K562 (cell line): ENCODE measurements at regions of chrX and their contacts with region 1.

Region 1: DNA sequence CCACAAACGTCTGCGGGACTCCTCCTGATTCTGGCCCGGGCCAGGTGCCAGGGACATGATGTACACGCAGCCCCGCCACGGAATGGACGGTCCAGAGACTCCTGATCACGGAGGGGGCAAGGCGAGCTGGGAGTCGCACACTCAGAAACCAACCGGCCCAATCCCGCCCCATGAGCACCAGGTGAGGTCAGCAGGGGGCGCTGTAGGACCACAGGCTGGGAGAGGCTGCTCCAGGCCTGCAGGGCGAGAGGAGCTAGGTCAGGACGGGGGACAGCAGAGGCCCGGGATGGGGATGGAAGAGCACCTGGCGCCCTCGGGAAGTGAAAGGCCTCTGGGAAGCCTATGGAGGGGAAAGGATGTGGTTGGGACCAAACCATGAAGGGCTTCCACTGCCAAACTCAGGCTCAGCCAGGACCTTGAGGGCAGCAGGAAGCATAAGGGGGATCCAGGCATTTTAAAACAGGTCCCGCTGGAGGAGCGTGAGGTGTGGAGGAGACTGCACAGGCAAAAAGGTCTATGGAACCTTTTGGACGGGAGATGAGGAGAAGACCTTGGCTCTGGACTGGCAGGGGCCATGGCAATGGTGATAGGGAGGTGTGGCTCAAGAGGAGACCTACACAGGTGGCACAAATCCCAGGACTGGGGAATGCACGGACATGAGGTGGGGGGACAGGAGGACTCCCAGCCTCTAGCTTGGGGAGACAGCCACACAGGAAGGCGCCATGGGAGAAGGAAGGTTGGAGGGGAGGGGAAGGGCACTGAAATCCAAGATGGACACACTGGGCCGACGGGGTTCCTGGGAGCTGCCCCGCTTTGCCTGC is 79.2 kb downstream of the MTMR1 start:
- DNase-seq: peak; percentile 81 to 82 (median 82)
- ATAC-seq: peak; percentile 97
- H3K4me3 ChIP-seq: no peak overlapping the region
- H3K27ac ChIP-seq: no peak overlapping the region
- H3K4me1 ChIP-seq: peaks cover 6 to 15% of the 10 kb centered on the region in 2 experiments; a peak in 4 of 5 replicates
- H3K27me3 ChIP-seq: no peaks in the 10 kb centered on the region
- CTCF ChIP-seq: peak; percentile 82 to 93 (median 91)
- EP300 ChIP-seq: no peak
- POLR2A ChIP-seq: no peak
- RAD21 ChIP-seq: peak; percentile 90 to 95

Region 2: DNA sequence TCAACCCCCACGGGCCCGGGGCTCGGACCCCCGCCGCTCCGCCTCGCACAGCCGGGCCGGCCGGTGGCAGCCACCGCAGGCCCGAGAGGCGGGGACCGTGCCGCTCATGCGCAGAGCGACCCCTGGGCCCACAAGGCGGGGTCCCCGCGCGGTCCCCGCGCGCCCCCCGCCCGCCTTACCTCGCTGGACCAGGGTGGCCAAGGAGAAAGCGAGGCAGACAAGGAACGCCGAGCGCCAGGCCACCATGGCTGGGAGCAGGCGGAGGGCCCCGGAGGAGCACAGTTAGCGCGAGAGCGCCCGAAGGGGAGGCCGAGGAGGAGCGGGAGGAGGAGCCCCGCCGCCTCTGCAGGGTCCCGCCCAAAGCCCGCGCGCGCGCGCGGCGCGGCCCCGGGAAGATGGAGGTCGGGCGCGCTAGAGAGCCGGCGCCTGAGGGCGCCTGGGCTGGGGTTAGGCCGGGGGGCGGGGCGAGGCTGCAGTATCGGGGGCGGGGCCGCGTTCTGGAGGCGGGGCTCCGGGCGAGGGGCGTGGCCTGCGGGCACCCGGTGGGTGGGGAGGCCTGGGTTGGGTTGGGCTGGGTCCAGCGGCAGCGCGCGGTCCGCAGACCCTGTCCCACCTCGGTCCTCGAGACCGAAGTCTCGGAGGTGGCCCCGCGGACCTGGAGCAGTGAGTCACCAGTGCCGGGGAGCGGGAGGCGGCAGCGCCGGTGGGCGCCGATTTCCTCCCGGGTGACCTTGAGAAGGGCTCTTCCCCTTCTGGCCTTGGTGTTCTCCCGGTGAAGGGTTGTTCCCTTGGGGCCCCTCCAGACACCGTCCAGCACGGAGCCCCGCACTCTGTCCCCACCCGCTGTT is 126.2 kb after region 1 on chrX and contains the start of gene CD99L2:
- CTCF ChIA-PET with region 1: no interaction called
- POLR2A ChIA-PET with region 1: no interaction called
- in situ Hi-C with region 1: no loop called
- intact Hi-C with region 1: loop called (anchors 2 kb)
- DNase-seq: peak; percentile 92 to 94 (median 94)
- ATAC-seq: peak; percentile 97
- H3K4me3 ChIP-seq: peak within 1 kb of the TSS; percentile 78
- H3K27ac ChIP-seq: peak within 1 kb of the TSS; percentile 85
- H3K4me1 ChIP-seq: peaks cover 14 to 25% of the 10 kb centered on the region in 2 experiments
- H3K27me3 ChIP-seq: no peaks in the 10 kb centered on the region
- CTCF ChIP-seq: no peak
- EP300 ChIP-seq: no peak
- POLR2A ChIP-seq: peak; percentile 78
- RAD21 ChIP-seq: no peak
- polyA plus RNA-seq, gene CD99L2: 0.76 to 2.8 TPM

Region 3: DNA sequence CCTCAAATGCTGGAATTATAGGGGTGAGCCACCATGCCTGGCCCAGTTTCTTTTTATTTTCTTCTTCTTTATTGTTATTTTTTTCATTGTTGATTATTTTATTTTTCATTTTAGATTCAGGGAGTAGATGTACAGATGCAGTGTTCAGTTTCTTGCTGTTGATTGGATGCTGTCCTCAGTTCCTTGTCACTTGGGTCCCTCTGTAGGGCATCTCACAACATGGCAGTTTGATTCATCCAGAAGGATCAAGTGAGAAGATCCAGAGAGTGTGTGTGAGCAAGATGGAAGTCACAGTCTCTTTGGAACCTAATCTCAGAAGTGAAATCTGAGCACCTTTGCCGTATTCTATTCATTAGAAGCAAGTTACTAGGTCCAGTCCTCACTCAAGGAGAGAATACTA is 231.7 kb after region 1 on chrX:
- CTCF ChIA-PET with region 1: no interaction called
- POLR2A ChIA-PET with region 1: interaction called, 6 read pairs
- in situ Hi-C with region 1: loop called (anchors 5 kb)
- intact Hi-C with region 1: loop called (anchors 1 kb)
- DNase-seq: no peak
- ATAC-seq: peak; percentile 61; the same call in 2 of the 3 replicates
- H3K4me3 ChIP-seq: no peak overlapping the region
- H3K27ac ChIP-seq: no peak overlapping the region
- H3K4me1 ChIP-seq: no peaks in the 10 kb centered on the region
- H3K27me3 ChIP-seq: no peaks in the 10 kb centered on the region; a peak in 1 of 5 replicates
- CTCF ChIP-seq: peak; percentile 24 to 51 (median 39); a peak in 3 of 6 replicates
- EP300 ChIP-seq: no peak
- POLR2A ChIP-seq: no peak
- RAD21 ChIP-seq: peak in 1 of 2 experiments; percentile 45; a peak in 2 of 4 replicates

Region 4: GRCh38 chrX:151082076-151082948 is 310.0 kb after region 1 on chrX:
- CTCF ChIA-PET with region 1: interaction called, 17 read pairs
- POLR2A ChIA-PET with region 1: interaction called, 5 read pairs
- in situ Hi-C with region 1: loop called (anchors 10 kb)
- intact Hi-C with region 1: loop called (anchors 1 kb)
- DNase-seq: peak; percentile 70 to 73 (median 71)
- ATAC-seq: peak; percentile 98
- H3K4me3 ChIP-seq: no peak overlapping the region
- H3K27ac ChIP-seq: no peak overlapping the region
- H3K4me1 ChIP-seq: peaks cover 0 to 7% of the 10 kb centered on the region in 2 experiments; a peak in 2 of 5 replicates
- H3K27me3 ChIP-seq: peaks cover 0 to 12% of the 10 kb centered on the region in 2 experiments; a peak in 3 of 5 replicates
- CTCF ChIP-seq: peak; percentile 85 to 91 (median 88)
- EP300 ChIP-seq: no peak
- POLR2A ChIP-seq: no peak
- RAD21 ChIP-seq: peak; percentile 85 to 91

Region 5: DNA sequence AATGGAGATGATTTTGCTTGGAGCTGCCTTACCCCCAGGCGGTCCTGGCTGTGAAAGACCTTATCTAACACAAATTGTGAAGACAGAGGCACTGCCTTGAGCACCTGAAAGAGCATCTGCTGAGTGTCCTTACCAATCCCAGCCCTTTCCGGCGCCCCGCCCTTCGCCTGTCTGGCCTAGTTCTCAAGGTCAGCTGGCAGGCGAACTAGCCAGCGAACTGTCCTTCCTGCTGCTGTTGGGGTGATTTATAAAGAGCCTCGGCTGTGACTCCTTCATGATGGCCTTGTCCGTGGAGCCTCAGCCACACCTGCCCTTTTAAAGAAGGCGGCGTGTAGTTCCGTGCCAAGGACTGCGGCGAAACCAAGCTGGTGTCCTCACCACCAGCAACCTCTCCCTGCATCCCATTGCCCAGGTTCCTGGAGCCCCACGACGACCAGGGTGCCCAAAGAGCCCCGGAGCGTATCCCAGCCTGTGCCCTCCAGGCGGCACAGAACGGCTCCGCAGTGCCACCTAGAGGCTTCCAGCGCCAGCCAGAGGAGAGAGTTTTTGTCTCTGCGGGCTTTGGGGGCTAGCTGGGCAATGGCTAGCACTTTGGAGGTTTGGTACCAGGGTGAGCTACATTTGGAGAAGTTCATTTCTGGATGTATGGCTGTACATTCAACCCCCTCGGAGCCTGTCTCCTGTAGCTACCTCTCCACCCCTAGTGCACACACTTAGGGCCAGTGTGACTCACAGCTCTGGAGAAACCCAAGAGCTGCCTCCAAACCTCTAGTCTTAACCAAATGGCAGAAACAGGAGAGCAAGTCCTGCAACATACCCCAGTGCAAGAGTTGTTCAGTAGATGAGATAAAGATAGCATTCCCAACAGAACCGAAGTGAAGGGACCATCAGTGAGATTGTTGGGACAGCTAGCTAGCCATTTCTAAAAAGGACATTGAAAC is 587.8 kb after region 1 on chrX:
- CTCF ChIA-PET with region 1: no interaction called
- POLR2A ChIA-PET with region 1: no interaction called
- in situ Hi-C with region 1: loop called (anchors 25 kb)
- intact Hi-C with region 1: no loop called
- DNase-seq: peak; percentile 8 to 31 (median 20)
- ATAC-seq: peak; percentile 93
- H3K4me3 ChIP-seq: no peak overlapping the region
- H3K27ac ChIP-seq: no peak overlapping the region
- H3K4me1 ChIP-seq: peaks cover 0 to 5% of the 10 kb centered on the region in 2 experiments; a peak in 2 of 5 replicates
- H3K27me3 ChIP-seq: peaks cover 0 to 9% of the 10 kb centered on the region in 2 experiments; a peak in 1 of 5 replicates
- CTCF ChIP-seq: peak; percentile 65 to 73 (median 71)
- EP300 ChIP-seq: no peak
- POLR2A ChIP-seq: no peak
- RAD21 ChIP-seq: peak; percentile 41 to 57

Region 6: DNA sequence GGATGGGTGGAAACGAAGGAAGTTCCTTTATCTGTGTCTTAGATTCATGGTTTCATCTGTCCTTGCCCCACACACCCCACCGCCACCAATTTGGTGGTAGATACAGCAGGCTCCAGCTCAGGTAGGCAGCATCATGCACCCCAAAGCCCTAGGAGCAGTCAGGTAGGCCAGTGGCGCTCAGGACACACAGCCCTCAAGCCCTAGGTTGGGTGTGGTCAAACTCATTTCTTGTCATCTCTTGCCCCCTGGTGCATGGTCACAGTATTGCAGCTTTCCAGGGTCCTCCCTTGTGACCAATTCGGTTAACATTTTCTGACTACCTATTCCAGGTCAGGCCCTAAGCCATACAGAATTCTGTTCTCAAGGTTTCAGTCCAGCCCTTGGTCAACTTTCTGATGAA is 908.4 kb after region 1 on chrX:
- CTCF ChIA-PET with region 1: interaction called, 4 read pairs
- POLR2A ChIA-PET with region 1: no interaction called
- in situ Hi-C with region 1: loop called (anchors 25 kb)
- intact Hi-C with region 1: loop called (anchors 10 kb)
- DNase-seq: peak; percentile 62 to 78 (median 72)
- ATAC-seq: peak; percentile 99
- H3K4me3 ChIP-seq: no peak overlapping the region
- H3K27ac ChIP-seq: no peak overlapping the region
- H3K4me1 ChIP-seq: peaks cover 0 to 5% of the 10 kb centered on the region in 2 experiments; a peak in 3 of 5 replicates
- H3K27me3 ChIP-seq: peaks cover 0 to 12% of the 10 kb centered on the region in 2 experiments; a peak in 2 of 5 replicates
- CTCF ChIP-seq: peak; percentile 65 to 82 (median 81)
- EP300 ChIP-seq: no peak
- POLR2A ChIP-seq: no peak
- RAD21 ChIP-seq: peak; percentile 87 to 90